ENCODE measurements at regions of chr17 and their contacts with region 1.

Region 1: DNA sequence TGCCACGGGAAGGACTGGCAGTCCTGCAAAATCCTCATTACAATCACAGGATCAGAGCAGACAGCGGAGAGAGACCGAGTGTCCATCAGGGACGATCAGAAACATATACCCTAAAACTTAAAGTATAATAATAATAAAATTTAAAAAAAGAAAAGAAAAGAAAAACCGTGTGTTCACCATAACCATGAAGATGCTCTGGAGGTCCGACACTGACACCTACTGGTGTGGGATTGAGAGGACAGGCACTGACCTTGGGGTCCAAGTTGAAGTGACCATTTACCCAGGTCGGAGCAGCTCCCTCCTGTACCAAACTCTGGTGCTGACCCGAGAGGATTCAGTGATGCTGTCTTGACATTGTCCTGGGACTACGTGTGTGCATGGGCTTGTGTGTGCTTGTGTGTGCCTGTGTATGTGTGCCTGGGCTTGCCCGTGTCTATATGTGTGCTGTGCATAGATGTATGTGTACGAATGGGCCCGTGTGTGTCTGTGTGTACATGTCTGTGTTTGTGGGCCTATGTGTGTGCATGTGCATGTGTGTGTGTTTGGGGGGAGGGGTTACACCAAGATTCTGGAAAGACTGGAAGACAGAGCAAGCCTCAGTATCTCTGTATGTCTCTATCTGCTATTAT is 10.0 kb upstream of the CD300LD start:
- DNase-seq: peak; percentile 70 to 79
- ATAC-seq: peak; percentile 65 to 85; a peak in 4 of 6 replicates
- H3K4me3 ChIP-seq: no peak overlapping the region
- H3K27ac ChIP-seq: peak overlapping the region in 1 of 2 experiments; percentile 44; a peak in 2 of 6 replicates
- H3K4me1 ChIP-seq: peaks cover 12% of the 10 kb centered on the region
- CTCF ChIP-seq: peak; percentile 96
- EP300 ChIP-seq: no peak
- POLR2A ChIP-seq: no peak
- RAD21 ChIP-seq: peak; percentile 91 to 93

Region 2: DNA sequence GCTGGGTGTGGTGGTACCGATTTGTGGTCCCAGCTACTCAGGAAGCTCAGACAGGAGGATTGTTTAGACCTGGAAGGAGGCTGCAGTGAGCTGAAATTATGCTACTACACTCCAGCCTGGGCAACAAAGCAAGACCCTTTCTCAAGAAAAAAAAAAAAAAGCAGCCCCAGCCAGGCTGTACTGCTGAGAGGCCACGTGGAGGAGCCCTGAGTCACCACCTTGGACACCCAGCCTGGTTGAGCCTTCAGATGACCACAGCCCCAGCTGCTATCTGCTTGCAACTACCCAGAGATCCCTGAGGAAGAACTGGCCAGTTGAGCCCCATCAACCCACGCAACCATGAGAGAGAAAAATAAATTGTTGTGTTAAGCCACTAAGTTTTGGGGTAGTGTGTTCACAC is 193.8 kb before region 1 on chr17:
- CTCF ChIA-PET with region 1: interaction called, 13 read pairs
- POLR2A ChIA-PET with region 1: interaction called, 3 read pairs
- DNase-seq: peak; percentile 75 to 78
- ATAC-seq: peak; percentile 94 to 97
- H3K4me3 ChIP-seq: no peak overlapping the region
- H3K27ac ChIP-seq: peak overlapping the region in 1 of 2 experiments; percentile 61; a peak in 3 of 6 replicates
- H3K4me1 ChIP-seq: peaks cover 15% of the 10 kb centered on the region
- CTCF ChIP-seq: peak; percentile 60
- EP300 ChIP-seq: no peak
- POLR2A ChIP-seq: no peak
- RAD21 ChIP-seq: peak; percentile 77 to 79

Region 3: GRCh38 chr17:74528491-74529199 is 73.4 kb before region 1 on chr17:
- CTCF ChIA-PET with region 1: interaction called, 12 read pairs
- POLR2A ChIA-PET with region 1: no interaction called
- DNase-seq: no peak
- ATAC-seq: no peak
- H3K4me3 ChIP-seq: no peak overlapping the region
- H3K27ac ChIP-seq: no peak overlapping the region
- H3K4me1 ChIP-seq: no peaks in the 10 kb centered on the region
- CTCF ChIP-seq: no peak
- EP300 ChIP-seq: no peak
- POLR2A ChIP-seq: no peak
- RAD21 ChIP-seq: no peak

Region 4: GRCh38 chr17:74566132-74566753 is 35.8 kb before region 1 on chr17:
- CTCF ChIA-PET with region 1: interaction called, 142 read pairs
- POLR2A ChIA-PET with region 1: no interaction called
- DNase-seq: peak; percentile 51 to 66
- ATAC-seq: peak in 1 of 2 experiments; percentile 67; a peak in 3 of 6 replicates
- H3K4me3 ChIP-seq: no peak overlapping the region
- H3K27ac ChIP-seq: peak overlapping the region in 1 of 2 experiments; percentile 41; a peak in 1 of 6 replicates
- H3K4me1 ChIP-seq: peaks cover 27% of the 10 kb centered on the region
- CTCF ChIP-seq: peak; percentile 68
- EP300 ChIP-seq: no peak
- POLR2A ChIP-seq: no peak
- RAD21 ChIP-seq: peak; percentile 64 to 75

Region 5: DNA sequence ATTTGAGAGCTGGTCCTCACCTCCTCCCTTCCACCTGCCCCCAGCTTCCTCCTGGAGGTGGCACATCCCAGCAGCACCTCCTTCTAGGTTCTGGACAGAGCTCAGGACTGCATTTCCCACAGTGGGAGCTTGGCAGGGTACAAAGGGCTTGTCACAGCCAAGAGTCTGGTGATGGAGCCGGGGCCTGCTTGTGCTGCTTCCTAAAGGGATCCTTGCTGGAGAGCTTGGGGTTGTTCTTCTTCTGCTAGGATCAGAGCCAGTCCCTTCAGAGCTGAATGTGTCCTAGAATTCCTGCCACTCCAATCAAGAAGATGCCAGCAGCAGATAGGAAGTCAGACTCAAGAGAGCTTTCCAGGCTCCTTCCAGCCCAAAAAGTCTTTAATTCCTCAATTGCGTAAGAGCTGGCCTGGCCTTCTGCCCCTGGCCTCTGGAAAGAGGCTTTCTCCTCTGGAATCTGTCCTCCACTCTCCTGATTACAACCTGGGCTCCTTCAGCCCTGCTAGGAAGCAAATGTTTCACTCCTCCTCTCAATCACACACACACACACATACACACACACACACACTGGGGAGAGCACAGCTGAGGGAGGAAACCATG is 17.1 kb after region 1 on chr17:
- CTCF ChIA-PET with region 1: interaction called, 25 read pairs
- POLR2A ChIA-PET with region 1: no interaction called
- DNase-seq: no peak
- ATAC-seq: no peak
- H3K4me3 ChIP-seq: no peak overlapping the region
- H3K27ac ChIP-seq: no peak overlapping the region
- H3K4me1 ChIP-seq: no peaks in the 10 kb centered on the region
- CTCF ChIP-seq: no peak
- EP300 ChIP-seq: no peak
- POLR2A ChIP-seq: no peak
- RAD21 ChIP-seq: no peak

Measured in A549 (cell line).